GM12878 (cell line): ENCODE measurements at regions of chr2 and their contacts with region 1.

Region 1: DNA sequence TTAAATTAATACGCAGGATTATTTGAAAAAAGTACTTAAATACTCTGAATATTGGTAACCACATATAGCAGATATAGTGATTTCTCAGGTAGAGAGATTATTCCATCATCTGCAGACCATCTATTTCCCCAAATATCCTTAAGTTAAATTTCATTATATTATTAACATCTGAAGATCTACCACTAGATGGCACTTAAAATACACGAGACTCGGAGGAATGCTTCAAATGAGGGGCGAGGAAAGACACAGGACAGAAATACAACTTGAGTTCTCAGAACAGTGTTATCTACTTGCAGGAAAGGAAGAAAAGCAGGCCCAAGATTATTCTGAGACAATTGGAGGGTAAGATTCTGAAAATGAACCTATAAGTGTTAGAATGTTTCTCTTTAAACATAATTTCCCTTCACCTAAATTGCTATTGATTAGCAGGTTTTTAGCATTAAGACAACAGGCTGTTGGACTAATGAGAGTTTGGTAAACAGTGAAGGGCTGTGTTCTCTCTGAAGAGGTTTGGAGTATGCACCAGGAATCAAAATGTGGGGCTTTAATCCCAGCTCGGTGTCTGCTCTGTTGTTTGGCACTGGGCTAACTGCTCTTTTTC is 76.9 kb upstream of the GCFC2 start:
- DNase-seq: no peak
- ATAC-seq: peak; percentile 76
- H3K4me3 ChIP-seq: no peak overlapping the region
- H3K27ac ChIP-seq: no peak overlapping the region
- H3K4me1 ChIP-seq: peaks cover 14% of the 10 kb centered on the region
- H3K27me3 ChIP-seq: no peaks in the 10 kb centered on the region
- CTCF ChIP-seq: peak; percentile 38 to 65 (median 40)
- EP300 ChIP-seq: no peak
- POLR2A ChIP-seq: no peak
- RAD21 ChIP-seq: peak; percentile 91

Region 2: DNA sequence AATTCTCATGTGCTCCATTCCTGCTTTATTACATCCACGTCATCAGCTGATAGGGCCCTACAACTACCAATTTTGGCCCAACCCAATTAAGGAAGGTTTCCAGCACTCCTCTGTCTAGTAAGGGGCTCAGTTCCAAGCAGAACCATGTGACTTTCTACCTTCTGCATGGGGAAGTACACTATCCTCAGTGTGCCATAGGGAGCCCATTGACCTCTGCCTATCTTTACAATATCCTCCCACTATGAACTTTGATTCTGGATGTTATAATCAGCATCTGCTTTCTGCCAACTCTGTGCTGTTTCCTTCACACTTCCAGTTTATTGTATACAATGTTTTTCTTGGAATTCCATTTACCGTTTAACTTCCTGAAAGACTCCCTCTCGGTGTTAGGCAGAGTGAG is 23.0 kb before region 1 on chr2:
- CTCF ChIA-PET with region 1: no interaction called
- POLR2A ChIA-PET with region 1: no interaction called
- RAD21 ChIA-PET with region 1: no interaction called
- SMC1A ChIA-PET with region 1: no interaction called
- in situ Hi-C with region 1: no loop called
- intact Hi-C with region 1: no loop called
- DNase-seq: no peak
- ATAC-seq: no peak
- H3K4me3 ChIP-seq: no peak overlapping the region
- H3K27ac ChIP-seq: no peak overlapping the region
- H3K4me1 ChIP-seq: no peaks in the 10 kb centered on the region
- H3K27me3 ChIP-seq: no peaks in the 10 kb centered on the region; a peak in 1 of 4 replicates
- CTCF ChIP-seq: no peak
- EP300 ChIP-seq: no peak
- POLR2A ChIP-seq: no peak
- RAD21 ChIP-seq: no peak

Region 3: DNA sequence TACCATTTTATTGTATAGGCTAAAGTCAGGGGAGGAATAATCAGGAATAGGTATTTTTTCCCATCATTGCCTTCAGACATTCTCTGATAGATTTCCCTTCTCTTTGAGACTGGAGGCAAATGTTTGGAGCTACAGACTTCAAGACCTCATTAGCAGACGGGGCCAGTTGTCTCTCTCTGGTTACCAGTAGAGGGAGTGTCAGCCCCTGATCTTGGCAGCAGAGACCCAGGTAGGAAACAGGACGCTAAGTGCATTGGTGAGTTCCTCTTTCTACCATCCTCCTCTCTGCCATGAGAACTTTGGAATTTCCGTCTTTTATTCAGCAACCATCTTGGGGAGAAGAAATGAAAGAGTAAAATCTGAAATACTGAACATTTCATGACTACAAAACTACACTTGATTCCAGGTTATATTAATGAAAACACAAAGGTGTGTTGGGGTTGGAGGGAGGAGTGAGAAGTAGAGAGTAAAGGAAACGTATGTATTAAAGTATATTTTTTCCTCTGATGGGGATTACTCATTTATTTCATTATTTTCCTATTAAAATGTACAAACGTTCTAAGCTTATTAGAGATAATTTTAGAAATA is 109.2 kb after region 1 on chr2:
- CTCF ChIA-PET with region 1: interaction called, 5 read pairs
- POLR2A ChIA-PET with region 1: no interaction called
- RAD21 ChIA-PET with region 1: interaction called, 3 read pairs
- SMC1A ChIA-PET with region 1: no interaction called
- in situ Hi-C with region 1: no loop called
- intact Hi-C with region 1: loop called (anchors 2 kb)
- DNase-seq: no peak
- ATAC-seq: peak; percentile 92
- H3K4me3 ChIP-seq: no peak overlapping the region
- H3K27ac ChIP-seq: no peak overlapping the region
- H3K4me1 ChIP-seq: no peaks in the 10 kb centered on the region
- H3K27me3 ChIP-seq: no peaks in the 10 kb centered on the region
- CTCF ChIP-seq: peak; percentile 74 to 88 (median 79)
- EP300 ChIP-seq: no peak
- POLR2A ChIP-seq: no peak
- RAD21 ChIP-seq: peak; percentile 59

Region 4: GRCh38 chr2:75994759-75995158 is 207.1 kb after region 1 on chr2:
- CTCF ChIA-PET with region 1: no interaction called
- POLR2A ChIA-PET with region 1: no interaction called
- RAD21 ChIA-PET with region 1: no interaction called
- SMC1A ChIA-PET with region 1: no interaction called
- in situ Hi-C with region 1: no loop called
- intact Hi-C with region 1: loop called (anchors 10 kb)
- DNase-seq: no peak
- ATAC-seq: no peak
- H3K4me3 ChIP-seq: no peak overlapping the region
- H3K27ac ChIP-seq: no peak overlapping the region
- H3K4me1 ChIP-seq: no peaks in the 10 kb centered on the region
- H3K27me3 ChIP-seq: no peaks in the 10 kb centered on the region
- CTCF ChIP-seq: 0 out of 6 replicates have a peak, but pooled peaks of 1 of the 3 experiments have one; percentile 8
- EP300 ChIP-seq: no peak
- POLR2A ChIP-seq: no peak
- RAD21 ChIP-seq: no peak

Region 5: DNA sequence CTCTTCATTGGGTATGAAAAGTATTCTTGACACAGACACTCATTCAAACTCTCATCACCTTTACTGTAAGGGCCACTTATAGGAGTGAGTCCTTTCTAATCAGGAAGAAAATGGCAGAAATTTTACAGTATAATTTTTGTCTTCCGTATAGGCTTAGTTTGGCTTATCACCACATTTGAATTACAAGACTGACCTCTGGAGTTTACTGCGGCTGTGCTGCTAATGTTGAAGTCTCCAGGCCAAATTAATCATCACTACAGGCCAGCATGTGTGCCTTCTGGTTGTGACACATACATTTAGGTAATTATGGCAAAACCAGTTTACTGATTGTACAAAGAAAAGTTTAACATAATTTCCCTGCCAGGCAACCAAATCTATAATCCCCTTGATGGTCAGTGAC is 676.7 kb after region 1 on chr2:
- CTCF ChIA-PET with region 1: no interaction called
- POLR2A ChIA-PET with region 1: no interaction called
- RAD21 ChIA-PET with region 1: no interaction called
- SMC1A ChIA-PET with region 1: no interaction called
- in situ Hi-C with region 1: no loop called
- intact Hi-C with region 1: loop called (anchors 5 kb)
- DNase-seq: no peak
- ATAC-seq: peak; percentile 61
- H3K4me3 ChIP-seq: no peak overlapping the region
- H3K27ac ChIP-seq: no peak overlapping the region
- H3K4me1 ChIP-seq: no peaks in the 10 kb centered on the region
- H3K27me3 ChIP-seq: no peaks in the 10 kb centered on the region
- CTCF ChIP-seq: no peak; a peak in 1 of 6 replicates
- EP300 ChIP-seq: no peak
- POLR2A ChIP-seq: no peak
- RAD21 ChIP-seq: no peak